ENCODE measurements at regions of chr10 and their contacts with region 1.

Region 1: DNA sequence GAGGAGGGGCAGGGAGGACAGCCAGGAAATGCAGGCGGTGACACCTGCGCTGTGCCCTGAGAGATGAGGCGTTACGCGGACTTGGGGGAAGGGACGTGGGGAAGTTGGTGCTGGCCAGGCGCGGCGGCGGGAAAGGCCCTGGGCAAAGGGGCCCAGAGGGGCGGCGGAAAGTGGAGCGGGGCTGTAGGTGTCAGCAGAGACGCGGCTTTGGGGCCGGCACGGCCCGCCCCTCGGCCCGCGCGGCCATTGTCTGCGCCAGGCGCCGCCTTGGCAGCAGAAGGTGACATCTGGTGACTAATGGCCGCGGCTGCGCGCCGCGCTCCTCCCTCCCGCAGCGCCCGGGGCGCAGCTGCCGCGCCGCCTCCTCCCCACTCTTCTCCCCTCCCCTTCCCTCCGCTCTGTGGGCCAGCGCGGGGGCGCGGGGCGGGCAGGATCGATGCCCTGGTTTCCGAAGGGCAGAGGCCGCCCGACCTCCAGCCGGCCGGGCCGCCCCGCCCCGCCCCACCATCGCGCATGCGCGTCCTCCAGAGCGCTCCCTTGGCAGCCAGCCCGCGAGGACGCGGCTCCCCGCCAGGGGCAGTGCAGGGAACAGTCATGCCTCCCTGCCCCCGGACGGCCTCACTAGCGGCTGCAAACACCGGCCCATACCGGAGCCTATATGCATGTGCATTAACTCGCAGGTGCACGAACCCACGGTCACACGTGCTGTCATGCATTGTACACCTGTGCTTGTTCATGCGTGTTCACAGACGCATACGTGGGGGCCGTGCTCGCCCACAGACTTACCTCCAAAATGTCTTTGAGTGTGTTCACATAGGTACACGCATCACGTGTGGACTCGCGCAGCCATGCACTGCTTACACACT is 269.6 kb downstream of the RPS24 start:
- DNase-seq: peak; percentile 92
- H3K4me3 ChIP-seq: peak overlapping the region; percentile 68
- H3K27ac ChIP-seq: peak overlapping the region; percentile 40
- H3K4me1 ChIP-seq: peaks cover 26% of the 10 kb centered on the region
- CTCF ChIP-seq: peak; percentile 72

Region 2: GRCh38 chr10:78047314-78047891 is 255.8 kb before region 1 on chr10:
- CTCF ChIA-PET with region 1: no interaction called
- POLR2A ChIA-PET with region 1: no interaction called
- intact Hi-C with region 1: loop called (anchors 1 kb)
- DNase-seq: peak; percentile 86
- H3K4me3 ChIP-seq: no peak overlapping the region
- H3K27ac ChIP-seq: no peak overlapping the region
- H3K4me1 ChIP-seq: peaks cover 27% of the 10 kb centered on the region
- CTCF ChIP-seq: peak; percentile 88

Region 3: DNA sequence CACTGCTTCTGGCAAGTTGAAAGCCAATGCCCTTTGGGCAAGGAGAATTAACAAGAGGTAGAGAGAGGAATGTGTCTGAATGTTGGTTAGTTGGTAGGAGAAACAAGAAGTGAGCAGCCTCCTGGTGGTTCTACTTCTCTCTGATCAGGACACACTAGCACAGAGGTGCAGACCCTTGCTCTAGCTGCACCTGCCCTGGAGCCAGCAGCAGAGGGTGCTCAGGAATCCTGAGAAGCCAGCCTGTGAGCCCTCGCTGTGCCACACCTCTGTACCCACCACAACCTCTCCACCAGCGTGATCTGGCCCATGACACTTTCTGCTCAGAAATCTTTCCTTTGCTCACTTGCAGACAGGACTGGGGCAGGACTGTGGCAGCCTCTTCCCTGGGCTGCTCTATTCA is 95.2 kb after region 1 on chr10:
- CTCF ChIA-PET with region 1: no interaction called
- POLR2A ChIA-PET with region 1: no interaction called
- intact Hi-C with region 1: no loop called
- DNase-seq: no peak
- H3K4me3 ChIP-seq: no peak overlapping the region
- H3K27ac ChIP-seq: no peak overlapping the region
- H3K4me1 ChIP-seq: no peaks in the 10 kb centered on the region
- CTCF ChIP-seq: no peak

Region 4: GRCh38 chr10:78658645-78659597 is 355.7 kb after region 1 on chr10:
- CTCF ChIA-PET with region 1: no interaction called
- POLR2A ChIA-PET with region 1: no interaction called
- intact Hi-C with region 1: loop called (anchors 1 kb)
- DNase-seq: peak; percentile 93
- H3K4me3 ChIP-seq: peak overlapping the region; percentile 54
- H3K27ac ChIP-seq: peak overlapping the region; percentile 90
- H3K4me1 ChIP-seq: peaks cover 28% of the 10 kb centered on the region
- CTCF ChIP-seq: no peak

Region 5: DNA sequence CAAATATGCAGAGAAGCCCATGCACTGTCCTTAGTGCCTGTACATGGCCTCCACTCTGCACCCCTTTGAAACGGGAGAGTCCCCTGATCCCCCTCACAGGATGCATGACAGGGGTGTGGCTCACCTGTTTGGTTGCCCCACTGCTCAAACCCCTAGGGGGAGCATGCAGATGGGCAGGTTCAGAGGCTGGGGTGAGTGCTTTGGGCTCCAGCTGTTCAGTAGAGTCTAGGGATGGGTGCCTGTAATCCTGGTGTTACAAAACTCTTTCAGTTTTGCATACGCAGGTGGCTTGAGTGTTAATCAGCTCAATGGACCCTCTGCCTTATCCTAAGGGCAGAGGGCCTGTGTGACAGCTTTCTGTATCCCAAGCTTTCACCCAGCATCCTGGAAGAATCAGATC is 1299.7 kb after region 1 on chr10:
- CTCF ChIA-PET with region 1: no interaction called
- POLR2A ChIA-PET with region 1: no interaction called
- intact Hi-C with region 1: loop called (anchors 5 kb)
- DNase-seq: peak; percentile 85
- H3K4me3 ChIP-seq: peak overlapping the region; percentile 21
- H3K27ac ChIP-seq: peak overlapping the region; percentile 87
- H3K4me1 ChIP-seq: peaks cover 58% of the 10 kb centered on the region
- CTCF ChIP-seq: peak; percentile 48; the same call in 1 of the 2 replicates